Ascending aorta (tissue), 2 donors: ENCODE measurements at regions of chr11 and their contacts with region 1.

Region 1: GRCh38 chr11:13962562-13963168 is at the start of gene SPON1:
- DNase-seq: no peak
- H3K4me3 ChIP-seq: peak within 1 kb of the TSS; percentile 54 to 69
- H3K27ac ChIP-seq: peak within 1 kb of the TSS; percentile 44 to 48
- H3K4me1 ChIP-seq: peaks cover 0 to 7% of the 10 kb centered on the region in 2 donors
- H3K27me3 ChIP-seq: no peaks in the 10 kb centered on the region
- CTCF ChIP-seq: no peak
- total RNA-seq, gene SPON1: 37.8 TPM

Region 2: GRCh38 chr11:13923716-13924650 is 38.7 kb before region 1 on chr11:
- intact Hi-C with region 1: no loop called
- DNase-seq: no peak
- H3K4me3 ChIP-seq: no peak overlapping the region
- H3K27ac ChIP-seq: no peak overlapping the region
- H3K4me1 ChIP-seq: no peaks in the 10 kb centered on the region
- H3K27me3 ChIP-seq: no peaks in the 10 kb centered on the region
- CTCF ChIP-seq: no peak

Region 3: DNA sequence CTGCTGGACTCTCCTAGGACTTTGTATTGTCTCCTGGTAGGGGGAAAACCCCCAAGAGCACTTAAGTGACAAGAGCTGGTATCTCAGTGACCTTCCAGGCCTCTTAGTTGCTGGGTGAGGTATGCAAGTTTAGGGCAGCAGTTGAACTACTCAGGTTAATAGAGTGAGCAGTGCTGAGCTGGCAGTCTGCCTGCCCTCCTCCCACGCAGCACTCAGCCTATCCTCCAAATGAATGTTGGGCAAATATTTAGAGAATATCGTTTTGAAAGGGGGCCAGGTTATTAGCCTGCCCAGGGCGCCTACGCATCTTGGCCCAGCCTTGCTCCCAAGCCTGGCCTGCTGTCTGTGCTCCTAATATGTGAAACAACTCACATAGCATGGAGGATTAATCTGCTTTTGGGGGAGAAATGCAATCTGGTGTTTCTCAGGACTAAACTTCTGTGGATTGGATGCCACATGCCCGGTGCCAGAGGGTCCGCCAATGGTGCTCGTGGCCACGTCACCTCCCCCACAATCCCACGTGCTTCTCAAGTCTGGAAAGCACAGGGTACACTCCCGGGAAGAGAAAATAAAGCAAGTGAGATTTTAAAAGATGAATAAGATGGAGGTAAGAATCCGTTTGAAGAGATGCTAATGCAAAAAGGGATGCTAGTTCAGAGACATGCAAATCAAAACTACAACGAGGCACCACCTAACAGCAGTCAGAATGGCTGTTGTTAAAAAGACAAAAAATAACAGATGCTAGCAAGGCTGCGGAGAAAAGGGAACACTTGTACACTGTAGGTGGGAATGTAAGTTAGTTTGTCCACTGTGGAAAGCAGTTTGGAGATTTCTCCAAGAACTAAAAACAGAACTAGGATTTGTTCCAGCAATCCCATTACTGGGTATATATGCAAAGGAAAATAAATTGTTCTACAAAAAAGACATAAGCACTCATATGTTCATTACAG is 67.6 kb after region 1 on chr11:
- intact Hi-C with region 1: loop called (anchors 5 kb)
- DNase-seq: peak; percentile 11 to 88
- H3K4me3 ChIP-seq: peak overlapping the region in 1 of 2 donors; percentile 8
- H3K27ac ChIP-seq: peak overlapping the region; percentile 69 to 75
- H3K4me1 ChIP-seq: peaks cover 3 to 13% of the 10 kb centered on the region in 2 donors
- H3K27me3 ChIP-seq: no peaks in the 10 kb centered on the region
- CTCF ChIP-seq: no peak

Region 4: DNA sequence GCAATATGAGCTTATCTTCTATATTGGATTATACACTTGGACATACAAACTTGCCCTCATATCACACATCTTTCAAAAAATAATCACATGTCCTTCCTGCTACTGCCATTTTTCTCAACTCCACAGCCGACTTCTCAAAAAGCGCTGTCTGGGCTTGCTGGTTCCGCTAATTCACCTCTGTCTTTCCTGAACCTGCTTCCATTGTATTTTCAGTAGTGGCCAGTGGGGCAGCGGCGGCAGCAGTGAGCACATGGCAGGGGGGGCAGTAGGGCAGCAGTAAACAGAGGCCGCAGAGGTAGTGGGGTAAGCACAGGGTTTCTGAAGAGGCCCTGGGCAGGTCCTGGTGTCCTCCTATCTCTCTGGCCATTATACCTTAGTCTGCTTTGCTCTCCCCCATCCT is 270.0 kb after region 1 on chr11:
- intact Hi-C with region 1: no loop called
- DNase-seq: no peak
- H3K4me3 ChIP-seq: no peak overlapping the region
- H3K27ac ChIP-seq: no peak overlapping the region
- H3K4me1 ChIP-seq: no peaks in the 10 kb centered on the region
- H3K27me3 ChIP-seq: no peaks in the 10 kb centered on the region
- CTCF ChIP-seq: no peak